Mammary epithelial cell (primary cell): ENCODE measurements at regions of chr5 and their contacts with region 1.

Region 1: DNA sequence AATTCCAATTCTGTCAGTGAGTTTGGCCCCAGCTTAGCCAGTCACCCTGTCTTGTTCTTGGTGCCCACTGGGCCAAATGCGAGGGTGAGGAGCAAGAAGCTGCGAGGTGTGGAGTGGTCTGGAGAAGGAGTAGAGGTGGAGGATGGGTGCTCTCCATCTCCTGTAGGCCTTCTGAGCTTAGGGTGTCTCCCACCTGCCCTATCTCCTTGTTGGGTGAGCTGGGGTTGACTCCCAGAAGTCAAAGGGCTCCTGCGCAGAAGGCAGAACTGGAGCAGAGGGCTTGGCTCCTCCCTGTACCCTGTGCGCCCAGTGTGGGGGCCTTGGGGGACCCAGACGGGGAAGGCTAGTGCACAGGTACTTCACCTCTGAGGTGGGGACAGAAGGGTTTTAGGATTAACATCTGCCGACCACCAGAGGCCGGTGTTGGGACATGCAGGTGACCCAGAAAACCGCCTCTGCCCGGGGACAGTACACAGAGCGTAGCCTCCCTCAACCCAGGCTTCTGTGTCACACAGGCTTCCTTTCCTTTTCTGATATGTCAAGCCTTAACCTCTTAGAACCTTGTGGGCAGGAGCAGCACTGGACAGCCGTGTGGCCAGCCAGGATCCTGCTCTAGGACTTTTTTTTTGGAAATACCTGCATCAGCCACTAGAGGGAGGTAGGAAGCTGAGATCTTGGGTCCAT is 16.9 kb downstream of the IL5 start:
- DNase-seq: peak; percentile 42
- H3K4me3 ChIP-seq: no peak overlapping the region
- H3K27ac ChIP-seq: no peak overlapping the region
- H3K4me1 ChIP-seq: peaks cover 3% of the 10 kb centered on the region
- H3K27me3 ChIP-seq: no peaks in the 10 kb centered on the region
- CTCF ChIP-seq: peak; percentile 78 to 79

Region 2: GRCh38 chr5:132714456-132715307 is 188.2 kb after region 1 on chr5:
- CTCF ChIA-PET with region 1: no interaction called
- dilution Hi-C with region 1: no loop called
- in situ Hi-C with region 1: no loop called
- intact Hi-C with region 1: loop called (anchors 1 kb)
- DNase-seq: peak; percentile 1
- H3K4me3 ChIP-seq: no peak overlapping the region
- H3K27ac ChIP-seq: no peak overlapping the region
- H3K4me1 ChIP-seq: no peaks in the 10 kb centered on the region
- H3K27me3 ChIP-seq: no peaks in the 10 kb centered on the region
- CTCF ChIP-seq: peak; percentile 30 to 42

Region 3: GRCh38 chr5:132802044-132802684 is 275.7 kb after region 1 on chr5:
- CTCF ChIA-PET with region 1: no interaction called
- dilution Hi-C with region 1: no loop called
- in situ Hi-C with region 1: loop called in 1 of 2 experiments (anchors 10 kb)
- intact Hi-C with region 1: loop called (anchors 5 kb)
- DNase-seq: no peak
- H3K4me3 ChIP-seq: no peak overlapping the region
- H3K27ac ChIP-seq: no peak overlapping the region
- H3K4me1 ChIP-seq: peaks cover 18% of the 10 kb centered on the region
- H3K27me3 ChIP-seq: no peaks in the 10 kb centered on the region
- CTCF ChIP-seq: no peak

Region 4: GRCh38 chr5:132807163-132807838 is 280.9 kb after region 1 on chr5:
- CTCF ChIA-PET with region 1: no interaction called
- dilution Hi-C with region 1: no loop called
- in situ Hi-C with region 1: loop called in 1 of 2 experiments (anchors 10 kb)
- intact Hi-C with region 1: loop called (anchors 5 kb)
- DNase-seq: no peak
- H3K4me3 ChIP-seq: no peak overlapping the region
- H3K27ac ChIP-seq: no peak overlapping the region
- H3K4me1 ChIP-seq: no peaks in the 10 kb centered on the region
- H3K27me3 ChIP-seq: no peaks in the 10 kb centered on the region
- CTCF ChIP-seq: no peak

Region 5: DNA sequence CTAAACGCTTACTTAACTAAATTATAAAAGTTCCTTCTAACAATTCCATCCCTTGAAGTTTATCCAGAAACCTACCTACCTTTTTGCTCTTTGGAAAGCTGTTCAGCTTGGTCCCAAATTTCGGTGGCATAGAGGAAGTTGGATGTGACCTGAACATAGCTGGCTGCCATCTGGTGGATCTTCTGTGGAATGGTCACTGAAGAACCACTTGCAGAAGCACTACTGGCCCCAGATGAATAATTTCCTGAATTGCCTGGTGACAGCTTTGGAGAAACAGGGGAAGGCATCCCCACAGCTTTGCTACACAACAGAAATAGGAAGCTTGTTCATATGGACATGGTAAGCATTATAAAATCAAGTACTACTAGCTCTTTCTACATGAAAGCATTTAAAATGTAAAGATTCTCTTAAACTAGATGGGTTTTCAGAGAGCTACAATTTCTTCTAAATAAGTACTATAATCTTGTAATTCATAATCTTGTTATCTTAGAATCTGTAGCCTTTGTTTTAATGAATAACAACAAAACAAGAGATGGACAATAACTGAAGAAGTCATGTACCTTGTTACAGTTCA is 356.9 kb after region 1 on chr5:
- CTCF ChIA-PET with region 1: no interaction called
- dilution Hi-C with region 1: no loop called
- in situ Hi-C with region 1: no loop called
- intact Hi-C with region 1: loop called (anchors 5 kb)
- DNase-seq: peak; percentile 49
- H3K4me3 ChIP-seq: no peak overlapping the region
- H3K27ac ChIP-seq: no peak overlapping the region
- H3K4me1 ChIP-seq: no peaks in the 10 kb centered on the region
- H3K27me3 ChIP-seq: no peaks in the 10 kb centered on the region
- CTCF ChIP-seq: peak; percentile 56 to 69